ENCODE measurements at regions of chr9 and their contacts with region 1.

Region 1: GRCh38 chr9:122350638-122351355 is 20.0 kb upstream of the PTGS1 start:
- DNase-seq: peak; percentile 84 to 93 (median 88)
- ATAC-seq: peak; percentile 77 to 83
- H3K4me3 ChIP-seq: no peak overlapping the region
- H3K27ac ChIP-seq: no peak overlapping the region
- H3K4me1 ChIP-seq: peaks cover 7% of the 10 kb centered on the region
- H3K27me3 ChIP-seq: no peaks in the 10 kb centered on the region

Region 2: DNA sequence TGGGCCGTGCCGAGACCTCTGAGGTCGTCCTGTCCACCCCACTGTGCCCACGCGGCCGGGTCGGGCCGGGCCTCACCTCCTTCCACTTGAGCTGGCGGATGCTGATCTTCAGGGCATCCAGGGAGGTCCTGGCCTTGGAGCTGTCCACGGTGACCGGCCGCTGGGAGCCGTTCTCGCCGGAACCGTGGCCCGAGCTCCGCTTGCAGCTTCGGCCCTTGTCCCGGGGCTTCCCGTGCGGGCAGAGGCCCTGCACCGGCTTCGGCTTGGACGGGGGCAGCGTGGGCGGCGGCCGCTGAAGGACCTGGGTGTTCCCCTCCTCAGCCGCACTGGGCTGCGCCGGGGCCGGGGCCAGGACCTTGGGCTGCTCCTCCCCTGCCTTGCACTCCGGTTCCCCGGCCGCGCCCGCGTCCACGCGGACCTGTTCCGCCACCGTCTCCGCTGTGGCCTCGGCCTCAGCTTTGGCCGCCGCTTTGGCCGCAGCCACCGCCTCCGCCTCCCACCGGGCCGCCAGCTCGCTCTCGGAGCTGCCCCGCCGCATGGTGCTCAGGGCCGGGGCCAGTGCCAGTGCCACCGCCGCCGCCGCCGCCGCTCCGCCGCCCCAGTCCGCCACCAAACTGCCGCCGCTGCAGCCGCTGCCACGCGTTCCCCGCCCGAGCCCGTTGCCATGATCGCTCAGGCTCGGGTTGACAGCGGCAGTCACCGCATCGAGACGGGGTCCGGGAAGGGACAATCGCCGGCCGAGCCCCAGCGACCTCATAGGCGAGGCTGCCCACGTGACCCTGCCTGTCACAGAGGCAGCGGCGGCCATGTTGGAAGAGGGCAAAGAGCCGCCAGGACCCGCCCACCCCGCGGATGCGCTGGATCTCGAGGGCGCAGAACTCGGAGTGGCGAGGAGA is 257.9 kb before region 1 on chr9 and contains the start of gene TTLL11:
- intact Hi-C with region 1: loop called in 2 of 4 experiments (anchors 2 to 10 kb)
- DNase-seq: peak; percentile 98 to 99 (median 99)
- ATAC-seq: peak; percentile 96 to 97
- H3K4me3 ChIP-seq: peak within 1 kb of the TSS; percentile 70
- H3K27ac ChIP-seq: peak within 1 kb of the TSS; percentile 59
- H3K4me1 ChIP-seq: peaks cover 17% of the 10 kb centered on the region
- H3K27me3 ChIP-seq: no peaks in the 10 kb centered on the region
- total RNA-seq, gene TTLL11: 3.5 to 8.6 (median 5.8) TPM

Region 3: DNA sequence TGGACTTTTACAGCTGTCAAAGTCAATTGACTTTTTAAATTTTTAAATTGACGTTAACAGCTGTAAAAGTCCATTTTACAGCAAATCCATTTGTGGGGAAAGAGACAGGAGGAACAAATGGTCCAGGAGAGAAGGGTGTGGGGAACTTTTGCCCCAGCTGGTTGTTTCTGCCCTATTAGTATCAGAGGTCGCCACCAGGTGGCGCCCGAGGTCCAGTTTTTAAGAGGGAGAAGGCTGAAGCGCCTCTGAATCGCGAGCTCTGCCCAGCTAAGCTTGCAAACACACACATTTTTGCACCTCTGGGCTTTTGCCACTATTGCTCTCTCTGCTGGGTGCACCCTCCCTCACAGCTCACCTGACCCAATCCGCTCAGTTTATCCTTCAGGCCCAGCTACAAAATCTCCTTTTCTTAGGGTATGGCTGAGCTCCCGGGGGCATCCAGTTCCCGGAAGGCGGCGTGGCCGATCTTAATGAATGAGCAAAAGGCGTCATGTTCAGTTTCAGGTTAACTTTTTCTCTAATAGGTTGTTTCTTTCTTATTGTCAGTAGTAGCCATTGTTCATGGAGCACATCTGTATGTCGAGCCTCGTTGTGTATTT is 251.4 kb before region 1 on chr9:
- intact Hi-C with region 1: loop called in 2 of 4 experiments (anchors 2 to 10 kb)
- DNase-seq: peak; percentile 83 to 96 (median 91)
- ATAC-seq: peak; percentile 66 to 76
- H3K4me3 ChIP-seq: no peak overlapping the region
- H3K27ac ChIP-seq: no peak overlapping the region
- H3K4me1 ChIP-seq: no peaks in the 10 kb centered on the region
- H3K27me3 ChIP-seq: no peaks in the 10 kb centered on the region

Region 4: DNA sequence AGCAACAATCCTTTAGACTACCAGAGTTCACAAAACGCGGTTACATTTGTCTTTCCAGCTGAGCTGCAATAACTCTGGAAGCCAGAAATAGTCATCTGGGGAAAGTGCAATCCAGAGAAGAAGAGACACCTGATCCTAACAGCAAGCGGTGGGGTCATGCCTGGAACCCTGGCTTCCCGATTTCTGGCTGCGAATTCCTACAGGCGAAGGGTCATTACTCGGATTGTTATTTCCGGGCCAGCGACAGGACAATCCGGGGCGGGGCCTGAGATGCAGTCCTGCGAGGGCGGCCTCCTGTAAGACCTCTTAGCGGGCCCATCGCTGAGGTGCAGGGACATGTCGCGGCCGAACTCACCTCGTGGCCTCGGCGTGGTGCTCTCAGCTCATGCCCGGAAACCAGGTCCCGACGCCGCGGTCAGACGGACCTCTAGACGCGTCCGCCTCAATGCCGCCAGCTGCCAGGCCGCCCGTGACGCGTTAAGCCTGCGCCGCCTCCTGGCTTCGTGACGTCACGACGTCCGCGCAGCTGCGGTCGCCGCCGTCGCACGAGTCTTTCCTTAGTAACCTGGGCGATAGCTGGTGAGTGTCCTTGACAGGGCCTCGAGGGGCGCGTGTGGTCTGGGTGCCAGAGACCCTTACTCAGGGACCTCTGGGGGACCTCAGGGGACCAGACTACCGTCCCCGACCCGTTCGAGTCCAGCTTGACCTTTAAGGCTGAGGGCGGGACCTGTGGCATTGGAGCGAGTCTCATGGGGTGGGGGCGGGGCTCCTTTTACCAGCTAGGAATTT is 86.2 kb before region 1 on chr9 and contains the starts of genes MRRF and RBM18:
- intact Hi-C with region 1: loop called in 1 of 4 experiments (anchors 10 kb)
- DNase-seq: peak; percentile 90 to 96 (median 96)
- ATAC-seq: peak; percentile 91 to 96
- H3K4me3 ChIP-seq: peak within 1 kb of the TSS; percentile 48
- H3K27ac ChIP-seq: peak within 1 kb of the TSS; percentile 74
- H3K4me1 ChIP-seq: peaks cover 7% of the 10 kb centered on the region
- H3K27me3 ChIP-seq: no peaks in the 10 kb centered on the region
- total RNA-seq, gene MRRF: 24.9 to 33.8 (median 28.7) TPM
- total RNA-seq, gene RBM18: 30.4 to 36.2 (median 33.2) TPM

Region 5: DNA sequence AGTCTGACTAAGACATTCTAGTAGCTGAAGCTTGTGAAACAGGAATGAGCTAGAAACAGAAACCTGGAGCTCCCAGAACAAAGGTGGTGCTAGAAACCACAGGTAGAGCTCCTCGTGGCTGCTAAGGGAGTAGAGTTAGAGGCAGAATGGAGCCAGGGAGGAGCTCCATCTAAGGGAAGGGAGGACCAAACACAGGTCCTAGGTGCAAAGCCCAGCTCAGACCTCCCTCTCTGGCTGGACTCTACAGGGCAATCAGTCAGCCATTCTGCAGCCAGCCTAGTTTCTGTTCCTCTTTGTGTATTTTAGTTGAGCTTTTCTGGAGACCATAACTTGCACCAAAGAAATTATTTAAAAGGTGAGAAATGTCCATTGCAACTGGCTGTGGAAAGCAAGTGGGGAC is 1075.6 kb after region 1 on chr9:
- intact Hi-C with region 1: no loop called
- DNase-seq: no peak
- ATAC-seq: no peak
- H3K4me3 ChIP-seq: no peak overlapping the region
- H3K27ac ChIP-seq: no peak overlapping the region
- H3K4me1 ChIP-seq: no peaks in the 10 kb centered on the region
- H3K27me3 ChIP-seq: no peaks in the 10 kb centered on the region